Activated CD8-positive, alpha-beta T cell treated with anti-CD3 and anti-CD28 coated beads for 36 hours (primary cell): ENCODE measurements at regions of chr19 and their contacts with region 1.

Region 1: DNA sequence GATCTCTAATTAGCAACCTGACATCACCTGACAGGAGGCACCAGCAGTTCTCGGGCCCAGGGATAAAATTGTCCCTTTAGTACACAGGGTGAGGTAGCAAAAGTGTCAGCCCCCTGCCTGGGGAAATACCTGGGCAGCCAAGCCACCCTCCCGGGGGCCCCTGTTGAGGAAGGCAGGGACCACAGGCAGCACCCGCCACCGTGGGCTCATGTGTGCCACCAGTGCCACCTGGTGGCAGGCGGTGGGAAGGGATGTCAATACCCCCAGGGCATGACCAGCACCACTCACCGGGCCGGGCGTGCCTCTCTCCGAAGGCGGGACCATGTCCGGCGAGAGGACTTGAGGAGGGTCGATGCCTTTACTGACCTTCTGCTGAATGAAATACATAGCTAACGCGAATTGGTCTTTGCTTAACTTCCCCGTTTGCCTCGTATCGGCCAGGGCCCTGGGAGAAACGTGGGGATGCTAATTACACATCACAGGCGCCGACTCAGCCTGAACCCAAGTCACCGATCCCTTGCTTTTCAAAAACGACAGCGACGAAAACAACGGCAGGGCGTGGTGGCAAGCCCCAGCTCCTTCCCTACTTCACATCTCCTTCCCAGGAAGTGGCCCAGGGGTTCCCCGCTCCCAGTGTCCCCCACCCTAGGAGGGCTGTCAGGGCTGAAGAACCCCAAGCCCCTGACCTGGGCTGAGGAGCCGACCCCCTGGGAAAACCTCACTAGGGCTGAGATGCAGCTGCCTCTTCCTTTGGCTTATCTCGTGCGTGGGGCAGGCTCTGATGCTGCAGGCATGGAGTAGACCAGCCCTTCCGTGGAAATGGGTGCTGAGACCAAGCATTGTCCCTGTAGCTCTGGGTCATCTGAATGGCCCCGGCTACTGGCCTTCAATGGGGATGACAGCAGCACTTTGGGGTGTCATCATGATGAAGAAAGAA is 53.8 kb downstream of the EPS15L1 start:
- DNase-seq: peak; percentile 77
- ATAC-seq: peak; percentile 99
- H3K4me3 Mint-ChIP-seq: no peak overlapping the region
- H3K27ac Mint-ChIP-seq: no peak overlapping the region
- H3K4me1 Mint-ChIP-seq: peaks cover 11% of the 10 kb centered on the region
- H3K27me3 Mint-ChIP-seq: no peaks in the 10 kb centered on the region
- CTCF ChIP-seq: peak; percentile 92

Region 2: GRCh38 chr19:16247353-16248182 is 170.4 kb before region 1 on chr19:
- CTCF ChIA-PET with region 1: interaction called, 34 read pairs
- POLR2A ChIA-PET with region 1: interaction called, 3 read pairs
- intact Hi-C with region 1: no loop called
- DNase-seq: peak; percentile 88
- ATAC-seq: peak; percentile 93
- H3K4me3 Mint-ChIP-seq: no peak overlapping the region
- H3K27ac Mint-ChIP-seq: no peak overlapping the region
- H3K4me1 Mint-ChIP-seq: peaks cover 15% of the 10 kb centered on the region
- H3K27me3 Mint-ChIP-seq: no peaks in the 10 kb centered on the region
- CTCF ChIP-seq: peak; percentile 93

Region 3: GRCh38 chr19:16376649-16377048 is 41.3 kb before region 1 on chr19:
- CTCF ChIA-PET with region 1: interaction called, 10 read pairs
- POLR2A ChIA-PET with region 1: no interaction called
- intact Hi-C with region 1: no loop called
- DNase-seq: peak; percentile 60
- ATAC-seq: peak; percentile 52
- H3K4me3 Mint-ChIP-seq: no peak overlapping the region
- H3K27ac Mint-ChIP-seq: no peak overlapping the region
- H3K4me1 Mint-ChIP-seq: peaks cover 61% of the 10 kb centered on the region
- H3K27me3 Mint-ChIP-seq: no peaks in the 10 kb centered on the region
- CTCF ChIP-seq: peak; percentile 73

Region 4: GRCh38 chr19:16403151-16403977 is 14.6 kb before region 1 on chr19:
- CTCF ChIA-PET with region 1: interaction called, 16 read pairs
- POLR2A ChIA-PET with region 1: no interaction called
- intact Hi-C with region 1: no loop called
- DNase-seq: no peak
- ATAC-seq: no peak
- H3K4me3 Mint-ChIP-seq: no peak overlapping the region
- H3K27ac Mint-ChIP-seq: no peak overlapping the region
- H3K4me1 Mint-ChIP-seq: peaks cover 4% of the 10 kb centered on the region
- H3K27me3 Mint-ChIP-seq: no peaks in the 10 kb centered on the region
- CTCF ChIP-seq: no peak

Region 5: DNA sequence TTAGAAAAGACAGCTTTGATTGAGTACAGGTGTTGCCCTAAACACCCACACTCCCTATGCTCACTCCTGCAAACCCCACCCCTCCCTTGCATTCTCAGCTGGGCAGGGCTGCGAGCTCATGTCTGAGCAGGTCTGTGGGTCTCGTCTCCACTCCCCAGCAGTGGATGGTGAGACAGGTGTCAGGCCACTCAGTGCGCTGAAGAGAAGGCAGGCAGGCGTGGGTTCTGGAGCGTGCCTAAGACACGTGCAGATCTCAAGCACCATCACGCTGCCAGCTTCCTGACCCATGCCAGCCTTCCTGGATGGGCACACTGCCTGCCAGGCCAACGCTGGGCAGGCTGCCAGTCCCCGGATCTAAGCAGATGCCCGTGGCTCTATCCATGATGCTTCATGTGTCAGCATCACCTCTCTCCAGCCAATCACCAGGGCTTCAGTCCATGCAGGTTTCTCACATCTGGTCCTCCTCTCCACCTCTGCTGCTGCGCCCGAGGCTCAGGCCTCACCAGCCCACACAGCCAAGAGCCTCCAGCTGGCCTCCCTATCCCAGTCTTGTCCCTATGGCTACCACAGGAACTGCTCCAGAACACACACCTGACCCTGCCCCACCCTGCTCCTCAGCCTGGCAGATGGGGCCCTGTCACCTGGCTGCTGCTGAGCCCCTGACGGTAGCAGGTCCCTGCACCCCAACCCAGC is 11.3 kb after region 1 on chr19:
- CTCF ChIA-PET with region 1: no interaction called
- POLR2A ChIA-PET with region 1: no interaction called
- intact Hi-C with region 1: no loop called
- DNase-seq: no peak
- ATAC-seq: no peak
- H3K4me3 Mint-ChIP-seq: no peak overlapping the region
- H3K27ac Mint-ChIP-seq: no peak overlapping the region
- H3K4me1 Mint-ChIP-seq: peaks cover 4% of the 10 kb centered on the region
- H3K27me3 Mint-ChIP-seq: no peaks in the 10 kb centered on the region
- CTCF ChIP-seq: no peak

Region 6: DNA sequence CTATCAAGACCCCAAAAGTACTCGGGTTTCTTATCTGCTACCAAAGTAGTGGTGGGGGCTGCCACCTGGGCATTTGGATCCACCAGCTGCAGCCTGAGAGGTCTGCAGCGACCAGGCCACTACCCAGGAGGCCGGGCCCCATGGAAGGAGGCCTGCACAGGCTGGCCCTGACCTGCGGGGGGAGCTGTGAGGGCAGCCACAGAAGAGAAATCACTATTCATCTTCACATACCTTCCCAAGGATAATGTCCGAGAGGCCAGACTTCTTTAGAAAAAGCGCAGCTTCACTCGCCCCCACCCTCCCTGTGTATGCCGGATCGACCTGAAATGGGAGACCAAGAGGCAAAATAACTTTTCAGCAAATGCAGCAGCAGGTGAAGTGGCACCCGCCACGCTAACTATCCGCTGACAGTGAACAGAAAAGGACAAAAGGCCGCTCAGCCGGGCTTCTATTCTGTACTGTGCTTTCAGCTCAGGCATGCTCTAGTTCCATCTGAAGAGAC is 23.8 kb after region 1 on chr19:
- CTCF ChIA-PET with region 1: interaction called, 10 read pairs
- POLR2A ChIA-PET with region 1: no interaction called
- intact Hi-C with region 1: no loop called
- DNase-seq: peak; percentile 50
- ATAC-seq: peak; percentile 84
- H3K4me3 Mint-ChIP-seq: no peak overlapping the region
- H3K27ac Mint-ChIP-seq: no peak overlapping the region
- H3K4me1 Mint-ChIP-seq: peaks cover 28% of the 10 kb centered on the region
- H3K27me3 Mint-ChIP-seq: no peaks in the 10 kb centered on the region
- CTCF ChIP-seq: peak; percentile 68